Activated naive CD4-positive, alpha-beta T cell treated with anti-CD3 and anti-CD28 coated beads for 36 hours (primary cell): ENCODE measurements at regions of chr20 and their contacts with region 1.

Region 1: DNA sequence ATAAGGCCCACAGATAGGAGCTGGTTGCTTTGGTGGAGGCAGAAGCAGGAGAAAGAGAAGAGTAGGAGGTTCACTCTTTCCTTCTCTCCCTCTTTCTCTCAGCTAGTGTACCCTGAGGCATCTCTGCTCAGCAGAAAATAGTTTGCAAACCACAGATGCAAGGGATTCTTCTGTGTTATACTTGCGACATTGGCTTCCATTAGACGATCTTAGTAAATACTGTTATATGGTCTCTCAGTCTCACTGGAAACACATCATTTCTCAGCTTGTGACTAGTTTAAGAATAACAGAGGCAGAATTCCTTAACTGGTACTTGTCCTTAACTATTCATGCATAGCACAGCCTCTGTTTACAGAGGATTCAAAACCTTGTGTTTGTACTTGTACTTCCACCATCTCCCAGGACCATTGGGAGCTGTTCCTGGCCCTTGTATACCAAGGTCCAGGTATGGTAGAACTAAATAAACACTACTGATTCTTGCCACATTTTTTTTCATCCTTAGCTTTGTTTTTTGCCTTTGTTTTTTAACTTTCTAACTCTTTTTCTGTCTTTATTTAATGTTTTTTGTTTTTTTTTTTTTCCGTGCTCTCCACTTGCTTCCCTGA is 218.2 kb downstream of the OTOR start:
- DNase-seq: no peak
- H3K4me3 Mint-ChIP-seq: no peak overlapping the region
- H3K27ac Mint-ChIP-seq: no peak overlapping the region
- H3K4me1 Mint-ChIP-seq: no peaks in the 10 kb centered on the region
- H3K27me3 Mint-ChIP-seq: no peaks in the 10 kb centered on the region

Region 2: GRCh38 chr20:16828666-16829305 is 137.6 kb before region 1 on chr20:
- CTCF ChIA-PET with region 1: no interaction called
- intact Hi-C with region 1: no loop called
- DNase-seq: no peak
- H3K4me3 Mint-ChIP-seq: no peak overlapping the region
- H3K27ac Mint-ChIP-seq: no peak overlapping the region
- H3K4me1 Mint-ChIP-seq: no peaks in the 10 kb centered on the region
- H3K27me3 Mint-ChIP-seq: peaks cover 4% of the 10 kb centered on the region

Region 3: DNA sequence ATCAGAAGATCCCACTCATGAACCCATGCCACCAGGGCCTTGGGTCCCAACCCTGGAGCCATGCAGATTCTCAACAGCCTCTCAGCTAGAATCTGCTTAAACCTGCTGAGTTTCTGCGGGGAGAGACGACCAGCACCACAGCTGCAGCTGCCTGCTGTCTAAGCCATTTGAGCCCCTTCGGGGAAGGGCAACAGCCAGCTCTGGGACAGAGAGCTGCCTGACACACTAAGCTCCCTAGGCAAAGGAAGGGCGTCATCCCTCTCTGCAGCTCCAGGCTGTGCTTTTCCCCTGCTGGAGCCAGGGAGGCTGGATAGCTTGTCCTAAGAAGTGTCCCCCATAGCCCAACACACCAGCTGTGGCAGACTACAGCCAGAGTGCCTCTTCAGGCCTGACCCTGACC is 35.7 kb before region 1 on chr20:
- CTCF ChIA-PET with region 1: no interaction called
- intact Hi-C with region 1: loop called (anchors 1 kb)
- DNase-seq: no peak
- H3K4me3 Mint-ChIP-seq: no peak overlapping the region
- H3K27ac Mint-ChIP-seq: no peak overlapping the region
- H3K4me1 Mint-ChIP-seq: no peaks in the 10 kb centered on the region
- H3K27me3 Mint-ChIP-seq: peaks cover 5% of the 10 kb centered on the region